ENCODE measurements at regions of chr2 and their contacts with region 1.

Region 1: GRCh38 chr2:105797298-105797819 is 52.6 kb downstream of the NCK2 start:
- DNase-seq: peak; percentile 69
- ATAC-seq: peak; percentile 44
- H3K4me3 Mint-ChIP-seq: peak overlapping the region; percentile 64
- H3K27ac Mint-ChIP-seq: peak overlapping the region; percentile 94
- H3K4me1 Mint-ChIP-seq: peaks cover 96% of the 10 kb centered on the region
- H3K27me3 Mint-ChIP-seq: no peaks in the 10 kb centered on the region

Region 2: GRCh38 chr2:105582952-105583660 is 214.3 kb before region 1 on chr2:
- CTCF ChIA-PET with region 1: no interaction called
- POLR2A ChIA-PET with region 1: no interaction called
- intact Hi-C with region 1: loop called in 1 of 2 experiments (anchors 5 kb)
- DNase-seq: no peak
- ATAC-seq: no peak
- H3K4me3 Mint-ChIP-seq: no peak overlapping the region
- H3K27ac Mint-ChIP-seq: no peak overlapping the region
- H3K4me1 Mint-ChIP-seq: peaks cover 36% of the 10 kb centered on the region
- H3K27me3 Mint-ChIP-seq: no peaks in the 10 kb centered on the region

Region 3: DNA sequence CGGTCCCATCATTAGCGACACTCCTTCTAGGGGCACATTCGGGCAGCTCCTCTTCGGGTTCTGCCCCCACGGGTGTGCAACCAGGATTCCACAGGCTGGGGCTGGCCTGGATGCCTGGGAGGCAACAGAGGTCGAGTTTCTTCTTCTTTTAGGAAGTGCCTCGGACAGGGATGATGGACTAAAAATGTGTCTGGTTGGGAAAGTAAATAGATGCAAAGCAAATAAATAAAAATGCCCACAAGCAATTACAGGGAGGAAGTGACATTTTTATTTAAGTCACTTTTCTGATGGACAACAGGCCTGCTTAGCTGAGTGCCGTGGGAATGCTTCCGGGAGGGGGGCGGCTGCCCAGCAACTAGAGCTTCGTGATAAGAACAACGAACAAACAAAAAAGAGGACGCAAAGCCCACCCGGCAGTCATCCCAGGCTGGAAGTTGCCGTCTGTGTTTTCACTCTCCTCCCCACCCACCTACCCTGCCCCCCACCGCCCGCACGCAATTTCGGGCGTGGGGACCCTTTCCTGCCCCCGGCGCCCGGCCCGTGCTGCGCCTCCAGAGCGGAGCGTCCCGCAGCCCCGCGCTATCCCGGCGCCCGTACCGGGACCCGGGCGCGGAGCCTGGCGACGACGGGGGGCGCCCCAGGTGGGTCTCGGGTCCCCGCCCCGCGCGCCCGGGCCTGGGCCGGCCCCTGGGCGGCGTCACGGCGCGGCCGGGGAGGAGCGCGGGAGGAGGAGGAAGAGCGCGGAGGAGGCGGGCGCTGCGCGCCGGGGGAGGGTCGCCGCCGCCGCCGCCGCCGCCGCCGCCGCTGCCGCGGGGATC is 53.1 kb before region 1 on chr2:
- CTCF ChIA-PET with region 1: interaction called, 15 read pairs
- POLR2A ChIA-PET with region 1: interaction called, 33 read pairs
- intact Hi-C with region 1: loop called (anchors 1 to 2 kb)
- DNase-seq: peak; percentile 79
- ATAC-seq: peak; percentile 42
- H3K4me3 Mint-ChIP-seq: peak overlapping the region; percentile 77
- H3K27ac Mint-ChIP-seq: peak overlapping the region; percentile 87
- H3K4me1 Mint-ChIP-seq: peaks cover 70% of the 10 kb centered on the region
- H3K27me3 Mint-ChIP-seq: no peaks in the 10 kb centered on the region

Region 4: DNA sequence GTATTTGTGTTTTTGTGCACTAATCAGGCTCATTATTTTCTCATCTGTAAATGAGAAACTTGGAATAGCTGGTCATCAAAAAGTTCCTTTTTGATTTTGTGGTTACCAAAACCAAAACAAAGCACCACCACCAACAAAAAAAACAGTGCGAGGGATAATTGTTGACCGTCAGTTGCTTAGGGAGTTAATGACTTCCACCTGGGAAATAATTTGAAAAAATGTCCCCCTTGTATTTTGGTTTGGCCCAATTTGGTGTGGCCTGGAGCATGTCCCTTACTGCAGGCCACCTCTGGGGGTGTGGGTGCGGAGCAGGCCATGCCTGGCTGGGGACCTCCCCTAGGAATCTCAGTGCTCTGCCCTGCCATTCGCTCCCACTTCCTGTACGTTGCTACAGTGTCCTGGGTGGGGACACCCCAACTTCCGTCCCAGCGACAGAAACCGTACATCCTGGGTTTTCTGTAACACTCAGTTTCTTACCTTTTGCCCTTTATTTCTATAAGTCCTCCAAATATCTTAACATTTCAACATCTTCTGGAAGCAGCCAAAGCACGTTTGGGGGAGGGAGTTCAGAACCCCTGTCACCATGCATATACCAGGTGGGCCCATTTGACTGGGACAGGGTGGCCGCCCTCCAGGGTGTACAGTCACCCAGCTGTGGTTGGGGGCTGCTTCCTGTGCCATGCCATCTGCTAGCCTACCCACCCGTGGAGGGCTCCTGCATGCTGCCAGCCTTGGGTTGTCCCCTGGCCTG is 21.4 kb before region 1 on chr2:
- CTCF ChIA-PET with region 1: interaction called, 5 read pairs
- POLR2A ChIA-PET with region 1: no interaction called
- intact Hi-C with region 1: loop called in 1 of 2 experiments (anchors 2 kb)
- DNase-seq: peak; percentile 61
- ATAC-seq: peak; percentile 58
- H3K4me3 Mint-ChIP-seq: peak overlapping the region; percentile 47
- H3K27ac Mint-ChIP-seq: peak overlapping the region; percentile 84
- H3K4me1 Mint-ChIP-seq: peaks cover 95% of the 10 kb centered on the region
- H3K27me3 Mint-ChIP-seq: no peaks in the 10 kb centered on the region

Region 5: DNA sequence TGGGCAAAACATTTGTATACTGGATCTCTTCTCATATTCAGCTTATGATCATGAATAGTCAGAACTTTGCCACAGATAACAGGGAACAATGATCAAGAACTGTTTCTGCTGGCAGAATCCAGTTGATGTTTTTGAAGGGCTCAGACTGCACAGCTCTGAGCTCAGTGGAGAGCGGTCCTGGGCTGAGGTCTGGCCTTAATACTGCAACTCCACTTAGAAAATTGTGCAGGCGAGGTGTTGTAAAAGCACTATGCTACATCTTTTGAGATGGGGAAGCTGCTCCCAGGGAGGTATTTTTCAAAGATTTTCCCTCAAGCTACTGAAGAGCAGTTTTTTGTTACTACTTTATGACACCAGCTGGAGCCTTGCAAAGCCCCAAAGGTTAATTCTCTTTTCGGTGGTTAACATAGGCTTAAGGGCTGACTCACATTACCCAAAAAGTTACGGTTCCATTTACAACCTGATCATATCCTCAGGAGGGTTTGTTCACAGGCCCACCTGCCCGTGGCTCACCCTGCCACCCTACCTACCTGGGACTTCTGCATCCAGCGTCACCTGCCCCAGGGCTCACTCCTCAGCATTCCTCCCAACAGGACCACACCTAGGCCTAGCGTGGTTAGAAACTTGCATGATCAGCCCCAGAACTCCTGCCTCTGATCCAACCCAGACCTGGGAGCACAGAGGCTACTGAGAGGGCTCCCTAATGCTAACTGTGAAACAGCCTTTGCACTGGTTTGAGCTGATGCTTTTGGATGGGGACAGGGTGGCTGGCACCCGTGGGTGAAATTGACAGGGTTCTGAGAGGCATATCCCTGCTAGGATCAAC is 61.7 kb after region 1 on chr2:
- CTCF ChIA-PET with region 1: interaction called, 11 read pairs
- POLR2A ChIA-PET with region 1: interaction called, 4 read pairs
- intact Hi-C with region 1: no loop called
- DNase-seq: peak; percentile 51
- ATAC-seq: peak; percentile 65
- H3K4me3 Mint-ChIP-seq: peak overlapping the region; percentile 40
- H3K27ac Mint-ChIP-seq: peak overlapping the region; percentile 92
- H3K4me1 Mint-ChIP-seq: peaks cover 93% of the 10 kb centered on the region
- H3K27me3 Mint-ChIP-seq: no peaks in the 10 kb centered on the region

Region 6: GRCh38 chr2:107760620-107761364 is 1963.4 kb after region 1 on chr2:
- CTCF ChIA-PET with region 1: no interaction called
- POLR2A ChIA-PET with region 1: no interaction called
- intact Hi-C with region 1: no loop called
- DNase-seq: no peak
- ATAC-seq: no peak
- H3K4me3 Mint-ChIP-seq: no peak overlapping the region
- H3K27ac Mint-ChIP-seq: no peak overlapping the region
- H3K4me1 Mint-ChIP-seq: no peaks in the 10 kb centered on the region
- H3K27me3 Mint-ChIP-seq: peaks cover 2% of the 10 kb centered on the region

Measured in activated CD4-positive, alpha-beta T cell treated with anti-CD3 and anti-CD28 coated beads for 36 hours (primary cell).